ENCODE measurements at regions of chr11 and their contacts with region 1.

Region 1: GRCh38 chr11:47514825-47515647 is 37.9 kb downstream of the CELF1 start:
- DNase-seq: no peak
- ATAC-seq: peak; percentile 83 to 86 (median 84)
- H3K4me3 ChIP-seq: no peak overlapping the region
- H3K27ac ChIP-seq: peak overlapping the region; percentile 76
- H3K4me1 ChIP-seq: peaks cover 88% of the 10 kb centered on the region
- H3K27me3 ChIP-seq: no peaks in the 10 kb centered on the region
- CTCF ChIP-seq: no peak

Region 2: DNA sequence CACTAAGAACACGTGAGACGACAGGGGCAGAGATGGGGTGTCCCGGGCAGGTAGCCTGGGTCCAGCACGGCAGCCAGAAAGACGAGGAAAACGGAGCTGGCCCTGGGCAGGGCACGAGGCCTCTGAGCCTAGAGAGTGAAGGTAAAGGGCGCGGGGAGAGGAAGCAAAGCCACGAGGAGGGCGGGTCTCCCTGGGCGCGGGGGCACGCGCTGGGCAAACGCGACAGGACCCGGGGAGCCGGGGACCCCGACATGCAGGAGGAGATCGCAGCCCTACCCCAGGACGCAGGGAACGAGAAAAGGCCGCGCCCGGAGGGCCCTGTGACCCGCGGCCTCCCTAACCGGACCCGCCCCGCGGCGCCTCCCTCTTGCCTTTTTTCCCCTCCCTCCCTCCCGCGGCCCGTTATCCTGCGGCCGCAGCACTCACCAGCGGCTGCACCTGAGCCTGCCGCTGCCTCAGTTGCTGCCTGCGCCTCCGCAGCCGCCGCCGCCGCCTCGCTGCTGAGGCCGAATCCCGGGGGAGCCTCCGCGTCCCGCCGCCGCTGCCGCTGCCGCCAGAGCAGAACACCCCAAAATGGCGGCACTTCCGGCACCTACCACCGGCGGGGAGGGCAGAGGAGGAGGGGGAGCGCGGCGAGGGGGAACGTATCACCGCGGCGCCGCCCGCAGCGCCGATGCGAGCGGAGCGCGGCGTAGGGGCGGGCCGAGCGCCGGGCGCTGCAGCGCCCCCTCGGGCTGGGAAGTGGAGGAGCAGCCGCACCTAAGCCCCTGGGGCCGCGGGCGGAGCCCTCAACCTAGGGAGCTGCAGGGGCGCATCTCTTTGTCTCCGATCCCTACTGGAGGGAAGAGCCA is 37.8 kb after region 1 on chr11 and contains the start of gene CELF1:
- intact Hi-C with region 1: loop called (anchors 5 kb)
- DNase-seq: peak; percentile 93 to 96
- ATAC-seq: peak; percentile 91 to 96 (median 94)
- H3K4me3 ChIP-seq: peak within 1 kb of the TSS; percentile 81
- H3K27ac ChIP-seq: peak within 1 kb of the TSS; percentile 98
- H3K4me1 ChIP-seq: peaks cover 41% of the 10 kb centered on the region
- H3K27me3 ChIP-seq: no peaks in the 10 kb centered on the region
- CTCF ChIP-seq: peak; percentile 88
- total RNA-seq, gene CELF1: 79.0 to 193 (median 140) TPM

Region 3: GRCh38 chr11:48052183-48053045 is 537.4 kb after region 1 on chr11:
- intact Hi-C with region 1: no loop called
- DNase-seq: no peak
- ATAC-seq: peak in 2 of 4 donors; percentile 18 to 24
- H3K4me3 ChIP-seq: no peak overlapping the region
- H3K27ac ChIP-seq: no peak overlapping the region
- H3K4me1 ChIP-seq: no peaks in the 10 kb centered on the region
- H3K27me3 ChIP-seq: no peaks in the 10 kb centered on the region
- CTCF ChIP-seq: no peak

Measured in psoas muscle (tissue), 8 donors.